ENCODE measurements at regions of chr2 and their contacts with region 1.

Region 1: GRCh38 chr2:119476301-119477021 is 44.8 kb downstream of the TMEM37 start:
- DNase-seq: peak; percentile 57 to 74
- ATAC-seq: peak; percentile 86 to 95
- H3K4me3 ChIP-seq: 0 out of 3 replicates have a peak overlapping the region, but pooled peaks have one; percentile 25
- H3K27ac ChIP-seq: peak overlapping the region; percentile 29 to 67; a peak in 3 of 6 replicates
- H3K4me1 ChIP-seq: peaks cover 4% of the 10 kb centered on the region; the same call in 1 of the 3 replicates
- CTCF ChIP-seq: peak; percentile 95
- EP300 ChIP-seq: no peak
- POLR2A ChIP-seq: no peak
- RAD21 ChIP-seq: peak; percentile 92 to 96

Region 2: GRCh38 chr2:119407430-119408220 is 68.8 kb before region 1 on chr2:
- CTCF ChIA-PET with region 1: interaction called, 255 read pairs
- POLR2A ChIA-PET with region 1: no interaction called
- DNase-seq: peak; percentile 54 to 70
- ATAC-seq: peak; percentile 83 to 92
- H3K4me3 ChIP-seq: no peak overlapping the region
- H3K27ac ChIP-seq: no peak overlapping the region
- H3K4me1 ChIP-seq: no peaks in the 10 kb centered on the region
- CTCF ChIP-seq: peak; percentile 91
- EP300 ChIP-seq: no peak
- POLR2A ChIP-seq: no peak
- RAD21 ChIP-seq: peak; percentile 95

Region 3: DNA sequence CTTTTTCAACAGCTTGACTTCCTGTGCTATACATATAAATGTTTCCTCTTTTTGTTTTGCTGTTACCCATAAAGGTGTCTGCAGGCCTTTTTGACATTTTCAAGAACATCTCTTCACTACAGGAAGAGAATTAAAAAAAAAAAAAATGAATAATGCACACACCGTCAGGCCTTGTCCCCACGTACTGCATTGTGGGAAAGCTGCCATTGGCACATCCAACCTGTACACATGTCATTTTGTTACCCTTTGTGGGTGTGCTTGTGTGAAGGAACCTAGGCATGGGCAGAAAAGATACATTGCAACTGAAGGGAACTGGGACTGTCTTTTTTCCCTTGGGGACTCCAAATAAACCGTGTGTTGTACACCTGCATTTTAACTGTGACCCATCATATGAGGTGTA is 61.6 kb before region 1 on chr2:
- CTCF ChIA-PET with region 1: interaction called, 255 read pairs
- POLR2A ChIA-PET with region 1: no interaction called
- DNase-seq: no peak
- ATAC-seq: no peak
- H3K4me3 ChIP-seq: no peak overlapping the region
- H3K27ac ChIP-seq: no peak overlapping the region
- H3K4me1 ChIP-seq: peaks cover 12% of the 10 kb centered on the region; the same call in 2 of the 3 replicates
- CTCF ChIP-seq: no peak
- EP300 ChIP-seq: no peak
- POLR2A ChIP-seq: no peak
- RAD21 ChIP-seq: no peak

Region 4: DNA sequence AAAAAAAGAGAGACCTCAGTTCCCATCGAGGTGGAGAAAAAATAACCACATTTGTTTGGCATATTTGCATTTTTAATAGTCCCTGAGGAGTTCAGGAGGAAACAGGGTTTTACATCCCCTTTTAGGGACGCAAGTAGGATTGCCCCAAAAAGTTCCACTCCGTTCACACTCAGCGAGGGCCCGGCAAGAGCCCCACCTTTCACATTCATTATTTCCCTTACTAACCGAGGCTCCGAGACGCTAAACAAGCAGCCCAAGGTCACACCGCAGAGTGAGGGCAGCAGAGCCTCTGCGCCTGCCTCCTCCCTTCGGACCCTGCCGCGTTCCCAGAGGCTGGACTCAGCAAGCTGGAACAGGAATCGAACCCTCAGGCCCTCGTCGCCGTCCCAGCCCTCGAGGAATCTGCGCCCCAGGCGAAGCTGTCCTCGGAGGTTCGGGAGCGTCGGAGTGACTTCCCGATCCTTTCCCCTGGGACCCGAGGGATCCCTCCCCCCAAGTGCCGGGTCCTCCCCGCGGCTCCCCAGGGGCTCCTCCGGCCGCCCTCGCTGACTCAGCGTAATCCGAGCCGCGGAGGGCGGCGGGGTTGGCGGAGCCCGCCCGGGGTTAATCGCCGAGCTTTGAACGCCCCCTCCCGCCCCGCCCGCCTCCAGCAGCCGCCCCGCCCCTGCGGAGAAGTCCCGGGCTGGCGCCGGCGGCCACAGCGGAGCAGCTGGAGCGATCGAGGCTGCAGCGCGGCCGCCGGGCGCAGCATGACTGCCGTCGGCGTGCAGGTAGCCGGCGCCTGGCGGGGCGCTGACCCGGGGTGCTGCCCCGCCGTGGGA is 45.1 kb before region 1 on chr2 and contains the start of gene TMEM37:
- CTCF ChIA-PET with region 1: interaction called, 13 read pairs
- POLR2A ChIA-PET with region 1: no interaction called
- DNase-seq: peak; percentile 56 to 58
- ATAC-seq: peak; percentile 82 to 88
- H3K4me3 ChIP-seq: peak within 1 kb of the TSS; percentile 43
- H3K27ac ChIP-seq: peak within 1 kb of the TSS; percentile 64 to 91
- H3K4me1 ChIP-seq: peaks cover 38% of the 10 kb centered on the region
- CTCF ChIP-seq: no peak
- EP300 ChIP-seq: no peak
- POLR2A ChIP-seq: no peak
- RAD21 ChIP-seq: 0 out of 5 replicates have a peak, but pooled peaks of 1 of the 2 experiments have one; percentile 24
- polyA plus RNA-seq, gene TMEM37: 7.5 and 10.8 TPM in 2 replicates

Region 5: GRCh38 chr2:119441376-119442225 is 34.9 kb before region 1 on chr2:
- CTCF ChIA-PET with region 1: interaction called, 13 read pairs
- POLR2A ChIA-PET with region 1: no interaction called
- DNase-seq: no peak
- ATAC-seq: peak in 1 of 2 experiments; percentile 23; a peak in 2 of 6 replicates
- H3K4me3 ChIP-seq: no peak overlapping the region
- H3K27ac ChIP-seq: no peak overlapping the region
- H3K4me1 ChIP-seq: peaks cover 12% of the 10 kb centered on the region
- CTCF ChIP-seq: no peak
- EP300 ChIP-seq: no peak
- POLR2A ChIP-seq: no peak
- RAD21 ChIP-seq: no peak

Region 6: DNA sequence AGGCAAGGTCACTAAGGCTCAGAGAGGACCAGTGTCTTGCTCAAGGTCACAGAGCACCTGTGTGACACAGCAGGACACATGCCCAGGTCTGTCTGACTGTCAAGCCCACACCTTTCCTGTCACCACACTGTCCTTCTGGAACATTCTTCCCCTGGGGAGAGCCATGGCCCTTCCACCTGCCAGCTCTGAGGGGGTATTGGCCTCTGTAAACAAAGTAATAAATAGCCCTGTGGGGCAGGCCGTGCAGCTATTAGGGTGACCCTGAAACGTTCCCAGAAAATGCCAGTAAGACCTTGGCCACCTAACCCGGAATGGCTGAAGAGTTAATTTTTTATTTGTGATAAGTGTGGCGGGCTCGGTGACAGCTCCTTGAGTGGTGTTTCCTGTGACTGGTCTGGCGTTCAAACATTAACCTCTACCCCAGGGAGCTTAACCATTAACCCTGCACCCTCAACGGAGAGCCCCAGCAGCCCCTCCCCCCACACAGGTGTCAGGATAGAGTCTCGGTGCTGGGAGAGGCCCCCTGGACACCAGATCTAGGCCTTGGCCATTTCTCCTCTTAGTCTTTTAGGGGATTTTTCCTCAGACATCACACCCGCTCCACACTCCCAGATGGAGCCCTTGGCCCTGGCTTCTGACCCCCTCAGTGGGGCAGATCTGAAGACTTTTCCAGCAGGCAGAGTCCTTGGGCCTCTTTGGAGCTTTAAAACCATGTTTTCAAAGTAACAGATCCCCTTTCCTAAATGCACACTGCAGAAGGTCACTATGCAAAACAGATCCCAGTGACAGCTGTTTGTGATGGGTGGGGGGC is 11.2 kb after region 1 on chr2:
- CTCF ChIA-PET with region 1: interaction called, 77 read pairs
- POLR2A ChIA-PET with region 1: no interaction called
- DNase-seq: peak; percentile 21 to 35
- ATAC-seq: peak in 1 of 2 experiments; percentile 45; a peak in 3 of 6 replicates
- H3K4me3 ChIP-seq: no peak overlapping the region
- H3K27ac ChIP-seq: peak overlapping the region; percentile 67 to 78
- H3K4me1 ChIP-seq: peaks cover 86% of the 10 kb centered on the region
- CTCF ChIP-seq: no peak
- EP300 ChIP-seq: no peak
- POLR2A ChIP-seq: no peak
- RAD21 ChIP-seq: no peak

Region 7: GRCh38 chr2:119494163-119494790 is 17.8 kb after region 1 on chr2:
- CTCF ChIA-PET with region 1: interaction called, 77 read pairs
- POLR2A ChIA-PET with region 1: no interaction called
- DNase-seq: peak in 1 of 2 experiments; percentile 19
- ATAC-seq: peak in 1 of 2 experiments; percentile 47; a peak in 3 of 6 replicates
- H3K4me3 ChIP-seq: no peak overlapping the region
- H3K27ac ChIP-seq: peak overlapping the region in 1 of 2 experiments; percentile 8; a peak in 1 of 6 replicates
- H3K4me1 ChIP-seq: peaks cover 36% of the 10 kb centered on the region
- CTCF ChIP-seq: no peak
- EP300 ChIP-seq: no peak
- POLR2A ChIP-seq: no peak
- RAD21 ChIP-seq: no peak

Measured in A549 (cell line).